Natural killer cell (primary cell): ENCODE measurements at regions of chr12 and their contacts with region 1.

Region 1: DNA sequence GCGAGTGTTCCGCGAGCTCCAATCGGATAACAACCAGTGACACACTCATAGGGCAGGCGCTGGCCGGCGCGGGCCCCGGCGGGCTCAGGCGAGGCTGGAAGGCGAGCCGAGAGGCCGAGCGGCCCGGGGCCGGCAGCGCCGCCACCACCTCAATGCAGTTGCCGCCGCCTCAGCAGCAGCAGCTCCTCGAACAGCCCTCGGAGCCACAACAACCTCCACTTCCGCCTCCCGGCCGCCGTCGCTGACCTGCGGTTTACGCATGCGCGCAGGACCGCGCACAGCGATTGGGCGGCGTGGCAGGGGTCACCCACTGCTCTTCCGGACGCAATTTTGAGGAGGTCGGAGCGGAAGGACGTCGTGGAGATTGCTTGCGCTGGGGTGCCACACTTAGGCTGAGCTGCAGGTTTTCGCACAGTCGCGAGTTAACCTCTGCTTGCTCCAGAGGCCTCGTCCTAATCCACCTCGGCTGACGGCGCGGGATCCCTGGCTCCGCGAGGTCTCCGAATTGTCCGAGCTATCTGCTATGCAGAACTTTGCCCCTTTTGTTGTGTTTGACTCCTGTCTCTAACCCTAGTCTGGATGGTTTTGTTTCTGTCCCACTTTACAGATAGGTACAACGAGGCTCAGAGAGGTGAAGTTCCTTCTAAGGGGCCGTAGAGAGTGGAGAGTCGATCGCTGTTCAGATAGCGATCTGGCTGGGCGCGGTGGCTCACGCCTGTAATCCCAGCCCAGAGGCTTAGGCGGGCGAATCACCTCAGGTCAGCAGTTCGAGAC is at the starts of genes ACAD10 and BRAP:
- DNase-seq: peak; percentile 97
- ATAC-seq: peak; percentile 94 to 95 (median 95)
- H3K4me3 ChIP-seq: peak within 1 kb of the TSS; percentile 78
- H3K4me3 Mint-ChIP-seq: peak within 1 kb of the TSS; percentile 92
- H3K27ac ChIP-seq: peak within 1 kb of the TSS; percentile 84
- H3K27ac Mint-ChIP-seq: peak within 1 kb of the TSS; percentile 91 to 96
- H3K4me1 ChIP-seq: peaks cover 21% of the 10 kb centered on the region
- H3K4me1 Mint-ChIP-seq: peaks cover 35 to 48% of the 10 kb centered on the region in 2 donors
- H3K27me3 ChIP-seq: no peaks in the 10 kb centered on the region
- H3K27me3 Mint-ChIP-seq: no peaks in the 10 kb centered on the region
- CTCF ChIP-seq: no peak
- total RNA-seq, gene ACAD10: 19.0 to 29.0 (median 27.0) TPM
- total RNA-seq, gene BRAP: 24.6 to 28.8 (median 27.8) TPM

Region 2: GRCh38 chr12:111599459-111600204 is 86.3 kb before region 1 on chr12:
- intact Hi-C with region 1: loop called (anchors 2 kb)
- DNase-seq: peak; percentile 84 to 91
- ATAC-seq: peak; percentile 77 to 89 (median 86)
- H3K4me3 ChIP-seq: peak overlapping the region; percentile 77
- H3K4me3 Mint-ChIP-seq: peak overlapping the region; percentile 93
- H3K27ac ChIP-seq: peak overlapping the region; percentile 82
- H3K27ac Mint-ChIP-seq: peak overlapping the region; percentile 91 to 92
- H3K4me1 ChIP-seq: peaks cover 24% of the 10 kb centered on the region
- H3K4me1 Mint-ChIP-seq: peaks cover 24 to 29% of the 10 kb centered on the region in 2 donors
- H3K27me3 ChIP-seq: no peaks in the 10 kb centered on the region
- H3K27me3 Mint-ChIP-seq: no peaks in the 10 kb centered on the region
- CTCF ChIP-seq: no peak

Region 3: DNA sequence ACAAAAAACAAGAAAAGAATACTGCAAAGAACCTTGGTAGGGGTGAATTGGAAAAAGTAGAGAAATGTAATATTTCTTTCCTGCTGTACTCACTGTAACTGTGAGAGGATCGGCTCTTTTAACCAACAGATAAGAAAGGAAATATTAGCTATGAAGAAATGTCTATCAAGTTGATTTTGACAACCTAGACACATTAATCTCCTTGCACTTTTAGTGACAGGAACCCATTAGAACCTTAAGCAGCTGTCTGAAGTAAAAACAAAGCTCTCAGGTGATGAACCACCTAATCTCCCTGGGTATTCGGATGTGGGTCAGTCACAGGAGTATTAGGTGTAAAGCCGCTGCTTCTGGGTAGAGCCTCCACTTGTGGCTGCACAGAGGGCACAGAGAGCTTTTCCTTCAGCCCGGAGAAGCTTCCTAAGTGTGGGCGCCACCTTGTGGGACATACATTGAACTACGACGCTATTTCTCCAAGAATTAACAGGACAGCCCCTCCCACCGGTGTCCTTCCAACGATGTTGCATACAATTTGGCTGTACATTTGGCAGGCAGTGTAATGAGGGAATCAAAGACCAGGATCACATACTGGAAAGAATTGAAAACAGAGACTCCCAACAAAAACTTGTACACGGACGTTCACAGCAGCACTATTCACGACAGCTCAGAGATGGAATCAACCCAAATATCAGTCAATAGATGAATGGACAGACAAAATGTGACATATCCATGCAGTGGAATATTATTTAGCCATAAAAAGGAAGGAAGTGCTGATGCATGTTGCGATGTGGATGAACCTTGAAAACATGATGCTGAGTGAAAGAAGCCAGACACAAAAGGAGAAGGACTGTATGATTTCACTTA is 127.2 kb after region 1 on chr12:
- intact Hi-C with region 1: loop called (anchors 2 kb)
- DNase-seq: peak; percentile 31 to 87
- ATAC-seq: peak; percentile 86 to 99 (median 97)
- H3K4me3 ChIP-seq: no peak overlapping the region
- H3K4me3 Mint-ChIP-seq: no peak overlapping the region
- H3K27ac ChIP-seq: no peak overlapping the region
- H3K27ac Mint-ChIP-seq: no peak overlapping the region
- H3K4me1 ChIP-seq: peaks cover 5% of the 10 kb centered on the region
- H3K4me1 Mint-ChIP-seq: peaks cover 9 to 11% of the 10 kb centered on the region in 2 donors
- H3K27me3 ChIP-seq: no peaks in the 10 kb centered on the region
- H3K27me3 Mint-ChIP-seq: peaks cover 4 to 10% of the 10 kb centered on the region in 2 donors
- CTCF ChIP-seq: peak; percentile 80